ENCODE measurements at regions of chr17 and their contacts with region 1.

Region 1: GRCh38 chr17:58391302-58391984 is 25.9 kb downstream of the RNF43 start:
- DNase-seq: peak; percentile 93 to 96
- H3K4me3 ChIP-seq: no peak overlapping the region
- H3K4me3 Mint-ChIP-seq: peak overlapping the region; percentile 62
- H3K27ac Mint-ChIP-seq: peak overlapping the region; percentile 90
- H3K4me1 ChIP-seq: peaks cover 96% of the 10 kb centered on the region
- H3K4me1 Mint-ChIP-seq: peaks cover 68% of the 10 kb centered on the region
- H3K27me3 ChIP-seq: no peaks in the 10 kb centered on the region
- H3K27me3 Mint-ChIP-seq: no peaks in the 10 kb centered on the region
- CTCF ChIP-seq: no peak

Region 2: GRCh38 chr17:58369214-58370031 is 22.0 kb before region 1 on chr17:
- CTCF ChIA-PET with region 1: interaction called, 3 read pairs
- POLR2A ChIA-PET with region 1: no interaction called
- intact Hi-C with region 1: loop called (anchors 1 kb)
- DNase-seq: peak; percentile 71 to 77
- H3K4me3 ChIP-seq: no peak overlapping the region
- H3K4me3 Mint-ChIP-seq: peak overlapping the region; percentile 43
- H3K27ac Mint-ChIP-seq: peak overlapping the region; percentile 87
- H3K4me1 ChIP-seq: peaks cover 88% of the 10 kb centered on the region
- H3K4me1 Mint-ChIP-seq: peaks cover 74% of the 10 kb centered on the region
- H3K27me3 ChIP-seq: no peaks in the 10 kb centered on the region
- H3K27me3 Mint-ChIP-seq: no peaks in the 10 kb centered on the region
- CTCF ChIP-seq: no peak

Region 3: DNA sequence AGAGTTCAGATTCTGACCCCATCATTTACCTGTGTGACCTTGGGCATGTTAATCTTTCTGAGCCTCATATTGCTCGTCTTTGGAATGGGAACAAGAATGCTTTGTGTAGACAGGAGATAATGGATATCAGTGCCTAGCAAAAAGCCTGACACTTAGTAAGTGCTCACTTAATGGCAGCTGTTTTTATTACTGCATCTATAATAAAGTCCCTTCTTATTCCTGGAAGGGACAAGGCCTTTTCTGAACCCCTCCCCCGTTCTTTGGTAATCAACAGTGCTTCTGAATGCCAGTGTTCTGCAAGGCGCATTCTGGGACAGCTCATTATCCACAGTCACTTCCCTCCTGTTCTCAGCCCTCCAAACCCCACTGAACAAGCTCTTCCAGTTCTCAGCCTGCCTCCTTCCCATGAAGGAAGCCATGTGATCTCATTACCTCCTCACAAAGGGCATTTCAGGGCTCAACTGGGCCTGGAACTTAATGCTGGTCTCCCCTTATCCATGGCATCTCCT is 14.3 kb before region 1 on chr17:
- CTCF ChIA-PET with region 1: interaction called, 3 read pairs
- POLR2A ChIA-PET with region 1: no interaction called
- intact Hi-C with region 1: loop called (anchors 1 kb)
- DNase-seq: peak; percentile 81 to 89
- H3K4me3 ChIP-seq: no peak overlapping the region
- H3K4me3 Mint-ChIP-seq: peak overlapping the region; percentile 25
- H3K27ac Mint-ChIP-seq: peak overlapping the region; percentile 58
- H3K4me1 ChIP-seq: peaks cover 88% of the 10 kb centered on the region
- H3K4me1 Mint-ChIP-seq: peaks cover 74% of the 10 kb centered on the region
- H3K27me3 ChIP-seq: no peaks in the 10 kb centered on the region
- H3K27me3 Mint-ChIP-seq: no peaks in the 10 kb centered on the region
- CTCF ChIP-seq: no peak

Measured in Caco-2 (cell line).